Endothelial cell of umbilical vein (primary cell): ENCODE measurements at regions of chr1 and their contacts with region 1.

Region 1: DNA sequence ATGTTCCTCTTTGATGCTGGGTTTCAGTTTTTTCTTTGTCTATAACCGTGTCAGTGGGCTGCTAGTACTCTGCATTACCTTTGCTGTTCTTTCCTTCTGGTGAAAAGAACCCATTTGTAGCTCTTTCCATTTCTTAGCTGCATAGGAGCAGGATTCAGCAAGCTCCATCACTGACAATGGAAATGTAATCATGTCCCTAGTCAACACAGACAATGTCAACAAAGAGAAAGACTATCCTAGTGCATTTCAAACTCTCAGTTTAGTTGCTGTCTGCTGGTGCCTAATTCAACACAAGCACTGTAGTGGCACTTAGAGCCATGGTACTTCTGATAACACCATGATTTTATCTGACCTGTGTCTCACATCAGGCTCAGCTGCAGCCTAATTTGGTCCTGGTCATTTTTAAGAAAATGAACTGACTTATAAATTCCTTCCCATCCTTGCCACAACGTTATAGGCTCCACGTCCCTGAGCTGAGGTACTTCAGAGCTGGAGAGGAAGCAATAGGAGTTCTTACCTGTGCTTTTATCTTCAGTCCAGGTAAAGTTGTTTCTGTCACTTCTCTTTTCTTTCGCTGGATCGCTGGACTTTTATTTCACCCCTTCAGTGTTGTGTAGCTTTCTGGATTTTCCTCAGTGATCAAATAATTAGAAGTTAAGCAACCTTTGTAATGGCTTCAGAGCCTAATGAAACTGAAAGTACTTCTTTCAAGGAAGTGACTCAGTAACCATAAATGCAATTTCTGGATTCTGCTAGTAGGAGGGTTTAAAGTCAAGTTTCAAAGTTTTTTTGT is at the start of gene GBP3:
- DNase-seq: peak; percentile 76
- H3K4me3 ChIP-seq: peak within 1 kb of the TSS; percentile 59 to 97 (median 87)
- H3K27ac ChIP-seq: peak within 1 kb of the TSS; percentile 74
- H3K4me1 ChIP-seq: peaks cover 11% of the 10 kb centered on the region
- H3K27me3 ChIP-seq: no peaks in the 10 kb centered on the region
- CTCF ChIP-seq: no peak
- POLR2A ChIP-seq: no peak
- total RNA-seq, gene GBP3: 7.3 and 12.7 TPM in 2 replicates

Region 2: GRCh38 chr1:89125913-89126580 is 103.7 kb after region 1 on chr1 and contains the start of gene GBP2:
- CTCF ChIA-PET with region 1: no interaction called
- POLR2A ChIA-PET with region 1: no interaction called
- dilution Hi-C with region 1: no loop called
- intact Hi-C with region 1: loop called (anchors 2 kb)
- DNase-seq: peak; percentile 85
- H3K4me3 ChIP-seq: peak within 1 kb of the TSS; percentile 46 to 92 (median 89)
- H3K27ac ChIP-seq: peak within 1 kb of the TSS; percentile 65
- H3K4me1 ChIP-seq: peaks cover 30% of the 10 kb centered on the region
- H3K27me3 ChIP-seq: no peaks in the 10 kb centered on the region
- CTCF ChIP-seq: no peak
- POLR2A ChIP-seq: no peak
- total RNA-seq, gene GBP2: 19.4 and 30.2 TPM in 2 replicates